ENCODE measurements at regions of chr1 and their contacts with region 1.

Region 1: GRCh38 chr1:26787706-26788514 is at the start of gene PIGV:
- DNase-seq: no peak
- H3K4me3 ChIP-seq: peak within 1 kb of the TSS; percentile 60 to 62
- H3K27ac ChIP-seq: peak within 1 kb of the TSS; percentile 97
- H3K4me1 ChIP-seq: peaks cover 49% of the 10 kb centered on the region
- H3K27me3 ChIP-seq: no peaks in the 10 kb centered on the region
- CTCF ChIP-seq: peak in 1 of 3 experiments; percentile 23
- POLR2A ChIP-seq: peak in 1 of 2 donors; percentile 82
- total RNA-seq, gene PIGV: 8.1 TPM

Region 2: DNA sequence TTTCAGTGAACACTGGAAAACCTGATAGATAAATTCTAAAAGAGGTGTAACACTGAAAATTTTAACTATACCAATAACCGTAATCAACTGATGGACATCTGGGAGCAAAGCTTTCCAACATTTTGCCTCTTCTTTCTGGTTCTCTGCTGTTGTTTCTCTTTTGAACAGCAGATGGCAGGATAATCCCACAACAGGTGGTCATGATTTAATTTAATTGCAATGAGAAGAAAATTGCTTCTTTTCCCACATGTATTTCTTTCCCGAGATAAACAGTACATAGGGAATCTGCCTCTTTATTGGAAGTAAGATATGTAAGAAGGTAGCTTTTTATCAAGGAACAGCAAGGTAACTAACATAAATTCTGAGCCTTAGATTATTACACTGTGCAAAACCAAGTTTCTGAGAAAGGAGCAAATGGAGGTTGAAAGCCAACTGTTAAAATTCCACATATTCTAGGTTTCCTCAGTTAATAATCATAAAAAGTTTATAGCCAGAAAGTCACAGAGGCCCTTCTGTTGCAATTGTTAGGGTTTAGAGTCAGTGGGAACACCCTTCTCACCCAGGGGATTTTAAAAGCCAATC is 185.4 kb before region 1 on chr1:
- intact Hi-C with region 1: loop called (anchors 5 kb)
- DNase-seq: no peak
- H3K4me3 ChIP-seq: no peak overlapping the region
- H3K27ac ChIP-seq: no peak overlapping the region
- H3K4me1 ChIP-seq: no peaks in the 10 kb centered on the region
- H3K27me3 ChIP-seq: no peaks in the 10 kb centered on the region
- CTCF ChIP-seq: peak; percentile 72 to 90 (median 74)
- POLR2A ChIP-seq: no peak

Region 3: GRCh38 chr1:26692793-26693490 is 95.0 kb before region 1 on chr1:
- intact Hi-C with region 1: loop called (anchors 2 kb)
- DNase-seq: peak in 1 of 2 donors; percentile 97
- H3K4me3 ChIP-seq: peak overlapping the region; percentile 62 to 72
- H3K27ac ChIP-seq: peak overlapping the region; percentile 98
- H3K4me1 ChIP-seq: peaks cover 32% of the 10 kb centered on the region
- H3K27me3 ChIP-seq: no peaks in the 10 kb centered on the region
- CTCF ChIP-seq: peak in 1 of 3 experiments; percentile 13
- POLR2A ChIP-seq: peak in 1 of 2 donors; percentile 67

Region 4: GRCh38 chr1:26749458-26749857 is 38.5 kb before region 1 on chr1:
- intact Hi-C with region 1: loop called (anchors 1 kb)
- DNase-seq: no peak
- H3K4me3 ChIP-seq: no peak overlapping the region
- H3K27ac ChIP-seq: no peak overlapping the region
- H3K4me1 ChIP-seq: peaks cover 71% of the 10 kb centered on the region
- H3K27me3 ChIP-seq: no peaks in the 10 kb centered on the region
- CTCF ChIP-seq: no peak
- POLR2A ChIP-seq: no peak